GM10248 (cell line): ENCODE measurements at regions of chr7 and their contacts with region 1.

Region 1: DNA sequence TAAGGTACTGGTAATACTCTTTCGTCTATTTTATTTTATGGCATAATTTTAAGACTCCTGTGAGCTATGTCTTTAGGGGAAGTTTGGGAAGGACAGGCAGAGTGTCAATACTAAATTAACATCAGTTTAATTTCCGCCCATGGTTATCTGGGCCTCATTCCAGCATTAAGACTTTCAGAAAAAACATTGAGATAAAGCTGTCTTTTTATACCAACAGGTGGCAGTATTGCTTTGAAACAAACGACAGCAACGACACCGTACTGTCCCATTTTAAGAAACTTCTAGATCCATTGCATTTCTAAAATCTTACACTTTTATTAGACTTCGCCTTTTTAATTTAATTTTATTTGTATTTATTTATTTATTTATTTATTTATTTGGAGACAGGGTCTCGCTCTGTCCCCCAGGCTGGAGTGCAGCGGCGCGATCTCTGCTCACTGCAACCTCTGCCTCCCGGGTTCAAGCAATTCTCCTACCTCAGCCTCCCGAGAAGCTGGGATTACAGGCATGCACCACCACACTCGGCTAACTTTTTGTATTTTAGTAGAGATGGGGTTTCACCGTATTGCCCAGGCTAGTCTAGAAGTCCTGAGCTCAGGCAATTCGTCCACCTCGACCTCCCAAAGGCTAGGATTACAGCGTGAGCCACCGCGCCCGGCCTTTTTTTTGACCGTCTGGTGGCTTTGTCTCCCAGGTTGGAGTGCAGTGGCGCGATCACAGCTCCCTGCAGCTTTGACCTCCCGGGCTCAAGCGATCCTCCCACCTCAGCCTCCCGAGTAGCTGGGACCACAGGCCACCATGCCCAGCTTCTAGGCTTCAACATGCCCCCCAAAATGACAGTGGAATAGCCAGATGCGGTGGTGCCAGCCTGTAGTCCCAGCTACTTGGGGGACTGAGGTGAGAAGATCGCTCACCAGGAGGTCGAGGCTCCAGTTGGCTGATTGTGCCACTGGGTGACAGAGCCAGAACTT is 78.7 kb upstream of the C1GALT1 start:
- DNase-seq: peak; percentile 64
- CTCF ChIP-seq: peak; percentile 49

Region 2: GRCh38 chr7:7090460-7090859 is 13.2 kb before region 1 on chr7:
- CTCF ChIA-PET with region 1: interaction called, 36 read pairs
- POLR2A ChIA-PET with region 1: no interaction called
- DNase-seq: no peak
- CTCF ChIP-seq: no peak

Region 3: GRCh38 chr7:7114706-7115295 is 11.2 kb after region 1 on chr7:
- CTCF ChIA-PET with region 1: interaction called, 34 read pairs
- POLR2A ChIA-PET with region 1: no interaction called
- DNase-seq: no peak
- CTCF ChIP-seq: no peak

Region 4: DNA sequence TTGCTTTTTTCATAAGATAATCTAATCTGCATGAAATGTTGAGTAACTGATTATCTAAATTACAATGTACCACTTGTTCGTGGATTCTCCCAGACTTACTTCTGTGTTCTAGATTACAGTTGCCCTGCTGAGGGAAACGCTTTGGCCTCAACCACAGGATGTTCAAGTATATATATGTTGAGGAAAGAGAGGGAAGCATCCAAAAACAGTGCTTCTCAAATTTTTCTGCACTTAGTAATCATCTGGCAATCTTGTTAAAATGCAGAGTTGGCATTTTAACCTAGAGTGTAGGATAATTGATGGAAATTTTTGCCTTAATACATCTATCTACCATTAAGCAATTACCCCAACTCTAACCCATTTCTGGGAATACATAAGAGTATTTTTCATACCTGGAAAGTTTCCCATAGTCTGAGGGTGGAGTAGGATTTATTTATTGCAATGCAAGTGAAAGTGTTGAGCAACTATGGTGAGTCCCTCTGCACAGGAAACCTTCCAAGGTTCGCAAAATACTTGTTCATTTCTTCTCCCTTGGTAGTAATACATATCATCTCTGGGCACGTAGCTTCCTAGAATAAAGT is 19.2 kb after region 1 on chr7:
- CTCF ChIA-PET with region 1: interaction called, 34 read pairs
- POLR2A ChIA-PET with region 1: no interaction called
- DNase-seq: no peak
- CTCF ChIP-seq: no peak

Region 5: DNA sequence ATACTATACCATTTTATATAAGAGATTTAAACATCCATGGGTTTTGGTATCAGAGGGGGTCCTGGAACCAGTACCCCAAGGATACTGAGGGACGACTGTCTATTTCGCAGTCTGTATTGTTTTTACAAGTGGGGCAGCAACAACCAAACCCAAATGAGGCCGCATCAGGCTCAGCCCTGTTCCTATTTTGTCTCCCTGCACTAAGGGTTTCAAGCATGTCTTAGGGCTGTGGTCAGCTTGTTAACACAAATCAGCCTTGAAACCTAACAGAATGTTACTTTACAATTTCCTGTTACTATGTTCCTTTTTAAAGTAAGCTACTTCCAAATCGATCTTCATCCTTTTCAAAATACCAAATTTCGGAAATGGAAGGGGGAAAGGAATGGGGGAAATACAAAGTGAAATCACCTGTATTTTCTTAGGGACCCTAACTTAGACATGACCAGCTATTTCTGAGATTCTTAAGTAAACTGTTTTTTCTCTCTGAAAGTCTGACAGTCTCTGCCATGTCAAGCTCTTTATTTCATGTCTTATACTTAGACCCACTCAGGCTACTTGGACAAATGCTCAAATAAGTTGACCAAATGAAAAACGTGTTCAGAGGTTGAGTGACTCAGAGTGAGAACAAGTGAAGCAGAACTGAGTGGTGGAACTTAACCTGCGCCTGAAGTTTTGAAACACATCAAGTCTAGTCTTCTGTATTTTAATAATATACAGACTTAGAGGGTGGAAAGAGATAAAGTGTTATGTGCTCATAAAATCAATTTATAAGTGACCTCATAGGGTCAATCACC is 154.5 kb after region 1 on chr7:
- CTCF ChIA-PET with region 1: no interaction called
- POLR2A ChIA-PET with region 1: no interaction called
- DNase-seq: peak; percentile 67
- CTCF ChIP-seq: no peak

Region 6: DNA sequence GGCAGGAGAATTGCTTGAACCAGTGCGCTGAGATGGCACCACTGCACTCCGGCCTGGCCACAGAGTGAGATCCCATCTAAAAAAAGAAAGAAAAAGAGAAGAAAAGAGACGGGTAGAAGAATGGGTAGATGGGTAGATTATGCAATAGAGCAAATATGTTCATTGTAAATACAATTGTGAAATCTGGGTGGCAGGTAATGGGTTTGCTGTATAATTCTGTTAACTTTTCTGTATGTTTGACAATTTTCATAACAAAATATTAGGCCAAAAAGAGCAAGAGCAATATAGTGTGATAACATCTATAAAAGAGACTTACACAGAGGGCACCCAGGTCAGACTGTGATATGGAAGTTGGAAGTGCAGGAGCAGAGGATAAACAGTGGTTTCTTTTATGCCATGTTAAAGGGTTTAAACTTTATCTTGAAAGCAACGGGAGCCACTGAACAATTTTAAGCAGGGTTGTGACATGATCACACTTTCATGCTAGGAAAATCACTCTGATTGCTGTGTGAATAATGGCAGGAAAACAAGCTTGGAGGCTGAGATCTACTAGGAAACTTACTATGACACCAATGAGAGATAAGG is 438.7 kb after region 1 on chr7:
- CTCF ChIA-PET with region 1: interaction called, 24 read pairs
- POLR2A ChIA-PET with region 1: no interaction called
- DNase-seq: no peak
- CTCF ChIP-seq: no peak

Region 7: GRCh38 chr7:8295638-8296361 is 1192.2 kb after region 1 on chr7:
- CTCF ChIA-PET with region 1: interaction called, 19 read pairs
- POLR2A ChIA-PET with region 1: no interaction called
- DNase-seq: peak; percentile 72
- CTCF ChIP-seq: peak; percentile 81